GM10248 (cell line): ENCODE measurements at regions of chr12 and their contacts with region 1.

Region 1: DNA sequence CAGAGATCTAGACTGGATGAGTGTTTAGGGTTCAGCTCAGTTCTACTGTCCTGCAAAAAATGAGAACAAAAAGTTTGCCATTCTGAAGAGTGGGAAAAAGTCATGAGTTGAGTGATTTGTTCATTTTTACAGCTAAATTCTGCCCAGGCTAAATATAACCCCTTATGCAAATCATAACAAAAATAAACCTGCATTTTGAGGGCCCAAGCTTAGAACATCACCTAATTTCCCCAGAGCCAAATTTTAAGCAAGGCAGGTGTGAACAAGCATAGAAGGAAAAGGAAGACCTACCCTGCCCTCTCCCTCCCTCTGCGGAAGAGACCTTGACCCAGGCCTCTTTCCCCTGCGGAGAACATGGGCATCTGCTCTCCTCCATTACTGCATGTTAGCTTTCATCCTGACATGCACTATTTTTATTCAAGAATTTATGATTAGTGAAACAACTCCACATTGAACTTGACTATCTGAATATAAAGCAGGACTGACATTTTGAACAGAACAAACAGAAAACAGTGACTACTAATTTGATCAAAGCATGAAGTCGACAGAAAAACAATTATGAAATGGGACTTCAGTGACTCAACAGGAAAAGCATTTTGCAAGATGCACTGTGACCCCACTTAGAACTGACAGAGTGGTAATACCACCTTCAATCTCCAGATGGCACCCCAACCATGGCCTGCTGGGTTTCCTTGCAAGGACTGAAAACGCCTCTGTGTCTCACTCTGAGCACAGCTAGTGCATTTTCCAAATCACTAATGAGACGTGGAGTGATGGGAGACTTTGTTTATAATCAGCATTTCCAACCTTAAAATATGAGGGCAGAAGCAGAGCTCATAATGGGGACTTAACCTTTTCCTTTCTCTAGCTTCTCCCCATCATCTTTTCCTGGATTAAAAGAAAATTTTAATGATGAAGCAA is 30.9 kb upstream of the SELPLG start:
- DNase-seq: peak; percentile 74
- CTCF ChIP-seq: peak; percentile 65

Region 2: DNA sequence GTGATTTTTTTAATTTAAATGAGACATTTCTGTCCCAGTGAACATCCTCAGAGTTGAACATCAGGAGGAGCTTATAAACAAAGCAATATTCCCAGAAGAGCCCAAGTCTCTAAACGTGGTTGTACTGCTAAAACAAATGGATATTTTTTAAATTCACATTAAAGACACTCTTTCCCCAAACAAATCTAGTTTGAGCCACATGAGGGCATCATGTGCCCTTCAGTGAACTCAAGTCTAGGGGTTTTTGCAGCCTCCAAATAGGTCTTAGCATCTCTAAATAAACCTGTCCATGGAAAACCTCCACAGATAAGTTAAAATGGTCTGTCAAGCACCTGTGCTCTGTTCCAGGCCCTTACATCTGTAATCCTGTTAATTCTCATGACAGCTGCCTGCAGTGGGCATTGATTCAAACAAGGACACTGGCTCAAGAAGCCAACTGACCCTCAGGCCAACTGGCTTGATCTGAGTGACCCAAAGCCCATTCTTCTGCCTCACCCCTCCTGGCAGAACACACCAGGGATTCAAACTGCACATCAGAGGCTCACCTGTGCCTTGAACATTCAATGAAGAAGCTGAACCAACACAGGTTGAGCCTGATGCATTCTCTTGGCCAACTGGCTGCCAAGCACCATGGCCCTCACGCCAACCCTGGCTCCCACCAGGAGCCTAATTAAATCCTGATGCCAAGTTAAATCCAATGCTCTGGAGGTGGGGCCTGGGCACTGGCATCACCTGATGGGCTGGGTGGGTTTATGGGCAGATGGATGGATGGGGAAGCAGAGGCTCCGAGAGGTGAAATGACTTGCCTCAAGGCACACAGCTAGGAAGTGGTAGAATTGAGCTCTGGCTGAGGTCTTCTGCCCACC is 93.6 kb before region 1 on chr12:
- CTCF ChIA-PET with region 1: interaction called, 14 read pairs
- POLR2A ChIA-PET with region 1: no interaction called
- DNase-seq: no peak
- CTCF ChIP-seq: peak; percentile 40

Region 3: GRCh38 chr12:108633534-108634248 is 30.9 kb before region 1 on chr12 and contains the start of gene SELPLG:
- CTCF ChIA-PET with region 1: interaction called, 89 read pairs
- POLR2A ChIA-PET with region 1: interaction called, 9 read pairs
- DNase-seq: peak; percentile 87
- CTCF ChIP-seq: peak; percentile 20

Region 4: GRCh38 chr12:108678104-108678730 is 13.6 kb after region 1 on chr12:
- CTCF ChIA-PET with region 1: interaction called, 22 read pairs
- POLR2A ChIA-PET with region 1: interaction called, 4 read pairs
- DNase-seq: no peak
- CTCF ChIP-seq: no peak

Region 5: DNA sequence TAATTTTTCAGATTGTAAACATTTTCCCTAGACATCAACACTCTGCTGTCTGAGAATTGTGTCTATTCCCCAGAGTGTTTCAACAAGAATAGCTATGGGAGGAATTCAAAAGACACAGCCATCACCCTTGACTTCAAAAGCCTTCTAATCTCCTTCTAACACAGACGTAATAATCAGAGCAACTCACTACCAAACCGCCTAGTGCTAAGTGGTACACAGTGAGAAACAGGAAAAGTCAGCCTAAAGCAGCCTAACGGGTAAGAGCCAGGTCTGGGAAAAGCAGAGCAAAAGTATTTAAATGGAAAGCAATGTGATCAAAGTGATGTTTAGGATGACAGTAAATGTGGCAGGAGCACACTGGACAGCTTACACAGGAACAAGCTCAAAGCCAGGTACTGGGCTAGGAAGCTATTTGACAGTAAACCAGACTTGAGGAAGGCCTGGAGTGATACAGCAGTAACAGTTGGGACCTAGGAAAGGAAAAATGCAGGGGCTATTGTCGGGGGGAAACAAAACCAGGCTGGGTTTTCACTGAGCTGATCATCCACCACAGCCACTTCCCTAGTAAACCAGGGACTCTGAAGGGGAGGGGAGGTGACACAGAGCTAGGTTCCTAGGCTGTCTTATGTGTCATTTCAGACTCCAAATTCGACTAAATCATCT is 37.3 kb after region 1 on chr12:
- CTCF ChIA-PET with region 1: interaction called, 145 read pairs
- POLR2A ChIA-PET with region 1: no interaction called
- DNase-seq: no peak
- CTCF ChIP-seq: no peak

Region 6: DNA sequence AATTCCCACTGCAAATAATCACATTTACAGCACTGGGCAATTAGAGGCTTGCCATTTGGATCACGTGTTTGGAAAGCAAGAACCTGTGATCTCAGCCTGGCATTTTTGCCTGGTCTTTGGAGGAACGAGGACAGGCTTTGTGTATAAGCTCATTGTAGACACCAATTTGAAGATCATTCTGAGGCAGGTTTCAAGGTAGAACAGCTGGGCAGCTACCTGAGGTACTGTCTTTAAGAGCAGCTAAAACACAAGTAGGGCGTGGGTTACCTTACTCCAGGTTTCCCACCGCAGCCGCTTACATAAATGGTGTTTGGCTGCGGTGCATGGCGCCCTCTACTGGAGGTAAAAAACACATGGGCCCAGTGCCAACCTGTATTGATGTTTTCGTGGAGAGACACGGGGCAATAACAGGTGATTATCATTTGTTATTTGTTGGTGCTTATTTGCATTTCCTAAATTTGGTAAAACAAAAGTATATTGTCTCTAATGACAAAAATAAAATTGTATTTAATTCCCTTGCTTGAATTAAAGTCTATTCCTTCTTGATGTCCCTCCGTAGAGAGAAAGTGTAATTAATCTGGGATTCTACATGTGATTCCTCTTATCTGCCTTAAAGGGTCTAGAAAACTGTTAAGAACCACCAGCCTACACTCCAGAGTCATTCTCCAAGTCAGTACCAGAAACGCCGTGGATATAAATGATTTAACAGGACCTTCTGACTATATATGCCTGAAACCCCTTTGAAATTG is 286.6 kb after region 1 on chr12:
- CTCF ChIA-PET with region 1: interaction called, 21 read pairs
- POLR2A ChIA-PET with region 1: no interaction called
- DNase-seq: peak; percentile 62
- CTCF ChIP-seq: peak; percentile 81

Region 7: DNA sequence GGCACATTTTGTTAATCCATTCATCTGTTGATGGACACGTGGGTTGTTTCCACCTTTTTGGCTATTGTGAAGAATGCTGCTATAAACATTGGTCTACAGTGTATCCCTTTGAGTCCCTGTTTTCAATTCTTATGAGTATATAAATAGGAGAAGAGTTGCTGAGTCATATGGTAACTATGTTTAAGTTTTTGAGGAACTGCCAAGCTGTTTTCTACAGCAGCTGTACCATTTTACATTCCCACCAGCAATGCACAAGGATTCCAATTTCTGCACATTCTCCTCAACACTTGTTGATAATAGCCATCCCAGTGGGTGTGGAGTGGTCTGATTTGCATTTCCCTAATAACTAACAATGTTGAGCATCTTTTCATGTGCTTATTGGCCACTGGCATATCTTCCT is 363.2 kb after region 1 on chr12:
- CTCF ChIA-PET with region 1: no interaction called
- POLR2A ChIA-PET with region 1: no interaction called
- DNase-seq: no peak
- CTCF ChIP-seq: no peak